CD4-positive, alpha-beta T cell (primary cell): ENCODE measurements at regions of chr6 and their contacts with region 1.

Region 1: DNA sequence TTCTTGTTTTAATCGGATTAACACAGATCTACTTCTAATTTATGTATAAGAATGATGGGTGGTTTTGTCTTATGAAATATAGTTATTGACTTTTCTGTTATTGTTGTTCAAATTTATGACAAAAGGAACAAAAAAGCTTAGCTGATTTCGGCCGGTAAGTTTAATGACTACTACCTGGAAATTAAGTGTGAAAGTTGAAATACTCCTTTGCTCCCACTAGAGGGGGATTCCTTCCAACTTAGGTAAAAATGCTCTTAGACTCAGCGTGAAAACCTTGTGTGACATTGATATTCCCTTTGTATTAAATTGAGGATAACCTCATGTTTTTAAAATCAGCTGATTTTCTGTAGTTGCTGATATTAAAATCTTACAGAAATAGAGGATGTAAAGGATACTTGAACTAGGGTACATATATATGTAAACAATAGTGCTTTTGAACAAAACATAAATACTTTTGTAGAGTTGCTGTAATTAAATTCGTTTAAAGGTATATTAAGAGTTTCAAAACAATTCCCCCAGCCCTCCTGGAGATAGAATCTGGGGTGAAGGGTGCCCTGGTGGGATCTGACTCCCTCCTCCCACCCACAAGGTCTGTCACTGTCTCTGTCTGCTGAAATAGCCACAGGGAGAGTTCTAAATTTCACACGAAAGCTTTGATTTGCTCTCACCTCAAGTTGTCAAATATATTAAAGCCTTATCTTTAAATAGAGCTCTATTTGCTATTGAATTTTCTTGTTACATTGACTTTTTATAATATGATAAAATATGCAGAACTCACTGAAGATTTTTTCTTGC is 257.5 kb downstream of the ARID1B start:
- DNase-seq: peak in 3 of 14 experiments; percentile 63 to 72 (median 71)
- ATAC-seq: peak; percentile 86
- H3K4me3 ChIP-seq: no peak overlapping the region
- H3K4me3 Mint-ChIP-seq: peak overlapping the region; percentile 73
- H3K27ac ChIP-seq: no peak overlapping the region
- H3K27ac Mint-ChIP-seq: peak overlapping the region; percentile 86
- H3K4me1 ChIP-seq: peaks cover 2% of the 10 kb centered on the region
- H3K4me1 Mint-ChIP-seq: peaks cover 36% of the 10 kb centered on the region
- H3K27me3 ChIP-seq: no peaks in the 10 kb centered on the region
- H3K27me3 Mint-ChIP-seq: no peaks in the 10 kb centered on the region
- CTCF ChIP-seq: peak; percentile 71

Region 2: DNA sequence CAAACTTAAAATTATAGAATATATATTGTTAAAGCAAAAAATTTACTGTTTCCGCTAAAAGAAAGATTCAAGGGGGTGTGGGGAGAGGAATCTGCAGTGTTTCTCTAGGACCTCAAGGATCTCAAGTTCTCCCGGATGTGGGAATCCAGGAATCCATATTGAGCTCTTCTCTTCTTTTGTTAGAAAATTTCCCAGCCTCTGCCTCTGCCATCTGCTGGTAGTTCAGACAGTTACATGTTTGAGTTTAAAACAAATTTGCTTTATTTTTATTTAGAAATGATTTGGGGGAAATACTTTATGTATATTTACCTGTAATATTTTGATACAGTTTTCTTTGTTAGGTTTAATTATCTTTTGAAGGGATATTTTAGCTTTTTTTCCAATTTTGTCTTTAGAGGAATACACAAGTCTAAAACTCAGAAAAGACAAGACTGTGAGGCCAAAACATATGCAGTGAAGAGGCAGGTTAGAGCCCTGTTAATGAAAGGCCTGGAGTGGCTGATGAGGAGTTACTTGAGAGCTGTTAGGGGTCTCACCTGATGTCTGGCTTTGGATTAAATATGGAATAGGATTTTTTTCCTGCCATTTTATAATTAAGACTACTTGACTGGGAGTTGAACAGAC is 11.3 kb after region 1 on chr6:
- CTCF ChIA-PET with region 1: interaction called, 22 read pairs
- POLR2A ChIA-PET with region 1: no interaction called
- intact Hi-C with region 1: no loop called
- DNase-seq: no peak
- ATAC-seq: no peak
- H3K4me3 ChIP-seq: no peak overlapping the region
- H3K4me3 Mint-ChIP-seq: no peak overlapping the region
- H3K27ac ChIP-seq: no peak overlapping the region
- H3K27ac Mint-ChIP-seq: no peak overlapping the region
- H3K4me1 ChIP-seq: no peaks in the 10 kb centered on the region
- H3K4me1 Mint-ChIP-seq: peaks cover 14% of the 10 kb centered on the region
- H3K27me3 ChIP-seq: no peaks in the 10 kb centered on the region
- H3K27me3 Mint-ChIP-seq: no peaks in the 10 kb centered on the region
- CTCF ChIP-seq: peak; percentile 57

Region 3: GRCh38 chr6:157070403-157071107 is 35.9 kb after region 1 on chr6:
- CTCF ChIA-PET with region 1: no interaction called
- POLR2A ChIA-PET with region 1: no interaction called
- intact Hi-C with region 1: loop called in 1 of 2 experiments (anchors 5 kb)
- DNase-seq: no peak
- ATAC-seq: no peak
- H3K4me3 ChIP-seq: no peak overlapping the region
- H3K4me3 Mint-ChIP-seq: no peak overlapping the region
- H3K27ac ChIP-seq: no peak overlapping the region
- H3K27ac Mint-ChIP-seq: no peak overlapping the region
- H3K4me1 ChIP-seq: peaks cover 11% of the 10 kb centered on the region
- H3K4me1 Mint-ChIP-seq: peaks cover 71% of the 10 kb centered on the region
- H3K27me3 ChIP-seq: no peaks in the 10 kb centered on the region
- H3K27me3 Mint-ChIP-seq: no peaks in the 10 kb centered on the region
- CTCF ChIP-seq: no peak

Region 4: DNA sequence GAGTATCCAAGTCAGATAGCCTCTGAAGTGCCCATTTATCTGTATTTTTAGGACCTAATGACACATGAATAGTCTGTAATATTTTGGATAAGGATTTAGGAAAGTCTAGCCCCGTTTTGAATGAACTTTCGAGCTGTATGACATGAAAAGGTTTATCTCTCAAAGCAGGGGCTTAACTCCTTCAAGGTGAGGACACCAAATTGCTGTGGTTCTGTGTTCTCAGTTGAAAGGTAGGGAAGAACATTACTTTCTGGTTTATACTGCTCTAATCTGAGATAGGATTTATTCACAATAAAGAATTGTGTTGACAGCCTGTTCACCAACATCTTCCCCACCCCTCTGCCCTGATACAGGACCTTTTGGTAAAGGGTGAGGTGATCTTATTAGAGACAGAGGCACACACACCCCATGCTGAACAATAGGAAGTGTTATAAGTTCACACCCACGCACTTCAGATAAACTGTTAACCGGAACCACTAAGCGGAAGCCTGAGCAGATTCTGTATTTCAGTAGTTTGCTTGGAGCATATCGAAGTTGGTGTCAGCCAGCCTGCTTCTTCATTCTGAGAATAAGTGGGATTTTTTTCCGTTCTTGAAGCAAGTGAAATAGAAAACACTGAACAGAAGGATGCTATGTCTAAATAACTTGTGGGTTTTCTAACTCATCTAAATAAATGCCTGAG is 65.4 kb after region 1 on chr6:
- CTCF ChIA-PET with region 1: no interaction called
- POLR2A ChIA-PET with region 1: no interaction called
- intact Hi-C with region 1: loop called in 1 of 2 experiments (anchors 2 kb)
- DNase-seq: peak in 12 of 14 experiments; percentile 1 to 84 (median 16)
- ATAC-seq: peak; percentile 97
- H3K4me3 ChIP-seq: no peak overlapping the region
- H3K4me3 Mint-ChIP-seq: peak overlapping the region; percentile 63
- H3K27ac ChIP-seq: peak overlapping the region; percentile 38 to 48
- H3K27ac Mint-ChIP-seq: peak overlapping the region; percentile 95
- H3K4me1 ChIP-seq: peaks cover 24% of the 10 kb centered on the region
- H3K4me1 Mint-ChIP-seq: peaks cover 86% of the 10 kb centered on the region
- H3K27me3 ChIP-seq: no peaks in the 10 kb centered on the region
- H3K27me3 Mint-ChIP-seq: no peaks in the 10 kb centered on the region
- CTCF ChIP-seq: no peak

Region 5: GRCh38 chr6:157184202-157185020 is 149.8 kb after region 1 on chr6:
- CTCF ChIA-PET with region 1: interaction called, 9 read pairs
- POLR2A ChIA-PET with region 1: interaction called, 3 read pairs
- intact Hi-C with region 1: loop called (anchors 1 to 5 kb)
- DNase-seq: peak; percentile 35 to 75 (median 54)
- ATAC-seq: peak; percentile 85
- H3K4me3 ChIP-seq: no peak overlapping the region
- H3K4me3 Mint-ChIP-seq: no peak overlapping the region
- H3K27ac ChIP-seq: no peak overlapping the region
- H3K27ac Mint-ChIP-seq: no peak overlapping the region
- H3K4me1 ChIP-seq: peaks cover 16% of the 10 kb centered on the region
- H3K4me1 Mint-ChIP-seq: peaks cover 21% of the 10 kb centered on the region
- H3K27me3 ChIP-seq: no peaks in the 10 kb centered on the region
- H3K27me3 Mint-ChIP-seq: no peaks in the 10 kb centered on the region
- CTCF ChIP-seq: peak; percentile 63